A673 (cell line): ENCODE measurements at regions of chr10 and their contacts with region 1.

Region 1: DNA sequence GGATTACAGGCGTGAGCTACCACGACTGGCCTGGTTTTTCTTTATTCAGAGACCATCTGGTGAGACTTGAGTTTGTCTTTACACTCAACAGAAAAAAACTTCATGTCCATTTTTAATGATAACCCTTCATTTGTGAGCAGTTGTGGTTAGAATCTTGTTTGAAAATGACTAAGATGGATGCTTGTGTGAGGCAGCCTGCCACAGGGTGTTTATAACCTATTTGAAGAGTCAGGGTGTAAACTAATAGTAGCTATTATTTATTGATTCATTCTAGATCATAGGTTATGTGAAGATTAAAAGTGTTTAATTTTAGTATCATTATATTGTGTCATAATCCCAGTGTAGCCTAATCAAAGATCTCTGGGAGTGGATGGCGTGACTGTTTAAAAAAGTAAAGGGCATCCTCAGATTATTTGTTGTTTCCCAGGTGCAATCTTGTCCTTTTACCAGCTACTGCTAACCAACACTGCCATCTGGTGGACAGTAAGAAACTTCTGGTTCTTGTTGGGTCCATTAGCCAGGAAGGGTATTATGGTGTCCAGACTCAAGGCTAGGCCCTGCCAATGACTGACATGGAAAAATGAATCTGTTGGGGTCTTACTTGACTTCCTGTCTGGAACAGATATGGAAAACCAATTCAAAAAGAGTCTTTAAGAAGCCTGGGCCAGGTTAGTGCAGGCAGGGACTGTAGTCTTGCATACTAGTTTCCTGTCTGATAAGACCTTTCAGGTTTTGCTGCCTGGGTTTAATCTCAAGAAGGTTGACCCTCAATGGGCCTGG is 24.9 kb downstream of the NRBF2 start:
- DNase-seq: peak; percentile 89
- H3K4me3 ChIP-seq: no peak overlapping the region
- H3K27ac ChIP-seq: no peak overlapping the region
- H3K4me1 ChIP-seq: peaks cover 15% of the 10 kb centered on the region
- H3K27me3 ChIP-seq: no peaks in the 10 kb centered on the region
- CTCF ChIP-seq: peak; percentile 86

Region 2: DNA sequence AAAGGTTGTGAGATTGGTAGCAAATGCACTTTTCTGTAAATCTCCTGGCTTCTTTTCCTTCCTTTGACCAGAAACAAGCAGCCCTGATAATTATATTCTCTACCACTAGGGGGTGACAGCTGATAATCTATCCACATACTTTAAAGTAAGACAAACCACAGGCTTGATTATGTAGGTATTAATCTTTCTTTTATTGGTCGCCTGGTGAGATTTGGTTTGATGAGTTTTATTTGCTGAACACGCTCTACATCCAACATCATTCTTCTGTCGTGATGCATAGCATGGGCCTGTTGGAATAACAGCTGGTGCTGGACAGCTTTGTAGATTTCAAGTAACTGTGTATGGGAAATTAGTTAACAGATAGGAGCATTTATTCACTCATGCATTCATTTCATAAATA is 720.3 kb before region 1 on chr10:
- CTCF ChIA-PET with region 1: no interaction called
- POLR2A ChIA-PET with region 1: no interaction called
- intact Hi-C with region 1: loop called (anchors 1 kb)
- DNase-seq: peak; percentile 90
- H3K4me3 ChIP-seq: no peak overlapping the region
- H3K27ac ChIP-seq: no peak overlapping the region
- H3K4me1 ChIP-seq: peaks cover 25% of the 10 kb centered on the region
- H3K27me3 ChIP-seq: no peaks in the 10 kb centered on the region
- CTCF ChIP-seq: peak; percentile 89

Region 3: GRCh38 chr10:62492012-62492869 is 665.8 kb before region 1 on chr10:
- CTCF ChIA-PET with region 1: no interaction called
- POLR2A ChIA-PET with region 1: no interaction called
- intact Hi-C with region 1: loop called (anchors 5 kb)
- DNase-seq: peak; percentile 43
- H3K4me3 ChIP-seq: no peak overlapping the region
- H3K27ac ChIP-seq: no peak overlapping the region
- H3K4me1 ChIP-seq: no peaks in the 10 kb centered on the region
- H3K27me3 ChIP-seq: no peaks in the 10 kb centered on the region
- CTCF ChIP-seq: peak; percentile 70

Region 4: GRCh38 chr10:62594093-62594520 is 563.9 kb before region 1 on chr10:
- CTCF ChIA-PET with region 1: no interaction called
- POLR2A ChIA-PET with region 1: no interaction called
- intact Hi-C with region 1: loop called (anchors 5 kb)
- DNase-seq: peak; percentile 81
- H3K4me3 ChIP-seq: no peak overlapping the region
- H3K27ac ChIP-seq: no peak overlapping the region
- H3K4me1 ChIP-seq: peaks cover 6% of the 10 kb centered on the region
- H3K27me3 ChIP-seq: no peaks in the 10 kb centered on the region
- CTCF ChIP-seq: peak; percentile 97

Region 5: DNA sequence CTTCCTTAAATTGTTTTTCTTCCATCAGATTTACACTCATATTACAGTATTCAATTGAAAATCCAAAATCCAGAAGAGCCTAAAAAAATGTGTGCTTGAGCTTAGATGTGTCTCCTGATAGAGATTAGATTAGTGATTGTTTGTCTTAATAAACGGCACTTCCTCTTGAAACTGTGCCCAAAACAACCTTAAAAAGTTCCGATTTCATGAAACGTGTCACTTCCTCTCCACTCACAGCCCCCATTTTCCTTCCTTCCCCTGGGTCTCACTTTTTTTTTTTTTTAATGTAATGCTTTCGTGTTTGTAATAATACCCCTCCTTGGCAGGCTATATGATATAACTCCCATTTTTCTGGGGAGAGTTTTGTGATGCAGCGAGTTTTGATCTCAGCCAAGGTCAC is 468.3 kb before region 1 on chr10:
- CTCF ChIA-PET with region 1: no interaction called
- POLR2A ChIA-PET with region 1: no interaction called
- intact Hi-C with region 1: loop called (anchors 10 kb)
- DNase-seq: peak; percentile 81
- H3K4me3 ChIP-seq: no peak overlapping the region
- H3K27ac ChIP-seq: peak overlapping the region; percentile 94
- H3K4me1 ChIP-seq: peaks cover 51% of the 10 kb centered on the region
- H3K27me3 ChIP-seq: no peaks in the 10 kb centered on the region
- CTCF ChIP-seq: no peak

Region 6: DNA sequence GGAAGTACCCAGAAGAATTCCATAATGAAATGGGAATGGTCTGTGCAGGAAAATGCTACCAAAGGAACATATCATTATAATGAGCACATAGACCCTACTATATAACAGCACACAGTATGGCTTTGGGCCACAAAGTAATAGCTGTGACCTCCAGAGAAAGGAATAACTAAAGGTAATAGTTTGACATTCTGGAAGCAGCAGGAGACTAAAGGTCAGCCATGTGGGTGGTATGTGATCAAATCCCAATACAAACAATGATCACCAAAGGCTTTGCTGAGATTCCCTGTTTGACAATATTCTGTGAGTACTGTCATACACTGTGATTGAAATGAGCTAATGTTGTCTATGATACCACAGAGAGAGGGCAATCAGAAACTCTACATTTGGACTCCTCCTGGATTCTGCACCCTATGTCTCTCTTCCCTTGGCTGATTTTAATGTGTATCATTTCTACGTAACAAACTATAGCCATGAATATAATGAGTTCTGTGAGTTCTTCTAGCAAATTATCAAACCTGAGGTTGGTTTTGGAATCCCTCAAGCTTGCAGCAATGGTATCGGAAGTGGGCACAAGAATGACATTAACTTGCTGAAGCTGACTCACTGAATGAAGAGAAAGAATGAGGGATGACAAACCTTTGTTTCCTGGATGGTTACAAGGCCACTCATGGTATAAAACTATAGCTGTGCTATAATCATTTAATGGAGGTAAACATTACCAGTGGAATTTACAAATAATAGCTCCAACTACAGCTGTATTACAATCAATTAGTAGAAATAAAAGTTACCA is 208.1 kb after region 1 on chr10:
- CTCF ChIA-PET with region 1: no interaction called
- POLR2A ChIA-PET with region 1: no interaction called
- intact Hi-C with region 1: no loop called
- DNase-seq: no peak
- H3K4me3 ChIP-seq: no peak overlapping the region
- H3K27ac ChIP-seq: no peak overlapping the region
- H3K4me1 ChIP-seq: no peaks in the 10 kb centered on the region
- H3K27me3 ChIP-seq: no peaks in the 10 kb centered on the region
- CTCF ChIP-seq: no peak